Adrenal gland (tissue), 19 donors: ENCODE measurements at regions of chr9 and their contacts with region 1.

Region 1: DNA sequence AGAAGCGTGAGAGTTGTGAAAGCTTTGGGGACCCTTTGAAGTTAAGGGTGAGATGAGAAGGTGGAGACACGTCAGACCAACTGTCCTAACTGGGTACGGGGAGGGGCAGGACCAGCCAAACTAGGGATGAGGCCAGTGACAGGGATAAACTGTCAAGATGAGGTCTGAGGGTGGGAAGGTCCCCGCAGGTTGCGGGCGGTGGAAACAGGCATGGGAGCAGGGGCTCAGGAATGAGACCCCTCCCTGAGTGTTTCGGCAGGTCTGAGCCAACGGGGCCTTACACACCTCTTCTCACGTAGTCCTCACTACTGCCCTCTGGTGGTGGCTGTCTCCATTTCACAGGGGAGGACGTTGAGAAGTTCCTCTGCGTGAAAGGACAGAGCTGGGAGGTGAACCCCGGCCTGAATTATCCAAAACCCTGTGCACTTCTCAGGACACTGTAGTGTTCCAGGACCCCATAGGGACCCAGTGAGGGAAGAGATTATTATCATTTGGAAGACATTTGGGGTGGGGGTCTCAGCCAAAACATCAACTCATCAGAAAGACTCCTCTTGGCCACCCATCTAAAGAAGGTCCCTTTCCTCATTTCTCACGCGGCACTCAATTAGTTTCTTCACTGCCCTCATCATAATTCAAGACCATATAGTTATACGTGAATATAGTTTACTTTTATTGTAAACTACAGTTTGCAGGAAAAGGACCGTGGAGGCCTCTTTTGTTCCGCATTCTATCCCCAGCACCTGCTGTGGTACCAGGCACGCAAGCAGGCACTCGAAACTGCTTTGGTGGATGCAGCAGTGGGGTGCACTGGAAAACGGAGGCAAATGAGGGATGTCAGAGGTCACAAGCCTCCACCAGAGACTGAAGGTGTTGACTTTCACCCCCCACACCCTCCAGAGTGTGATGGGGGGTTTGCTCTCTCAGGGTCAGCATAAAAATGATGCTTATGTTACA is 21.7 kb upstream of the NANS start:
- DNase-seq: peak; percentile 80 to 94 (median 88)
- H3K4me3 ChIP-seq: no peak overlapping the region
- H3K27ac ChIP-seq: no peak overlapping the region
- H3K4me1 ChIP-seq: no peaks in the 10 kb centered on the region
- H3K27me3 ChIP-seq: no peaks in the 10 kb centered on the region
- CTCF ChIP-seq: peak; percentile 76 to 84 (median 79)
- POLR2A ChIP-seq: no peak

Region 2: DNA sequence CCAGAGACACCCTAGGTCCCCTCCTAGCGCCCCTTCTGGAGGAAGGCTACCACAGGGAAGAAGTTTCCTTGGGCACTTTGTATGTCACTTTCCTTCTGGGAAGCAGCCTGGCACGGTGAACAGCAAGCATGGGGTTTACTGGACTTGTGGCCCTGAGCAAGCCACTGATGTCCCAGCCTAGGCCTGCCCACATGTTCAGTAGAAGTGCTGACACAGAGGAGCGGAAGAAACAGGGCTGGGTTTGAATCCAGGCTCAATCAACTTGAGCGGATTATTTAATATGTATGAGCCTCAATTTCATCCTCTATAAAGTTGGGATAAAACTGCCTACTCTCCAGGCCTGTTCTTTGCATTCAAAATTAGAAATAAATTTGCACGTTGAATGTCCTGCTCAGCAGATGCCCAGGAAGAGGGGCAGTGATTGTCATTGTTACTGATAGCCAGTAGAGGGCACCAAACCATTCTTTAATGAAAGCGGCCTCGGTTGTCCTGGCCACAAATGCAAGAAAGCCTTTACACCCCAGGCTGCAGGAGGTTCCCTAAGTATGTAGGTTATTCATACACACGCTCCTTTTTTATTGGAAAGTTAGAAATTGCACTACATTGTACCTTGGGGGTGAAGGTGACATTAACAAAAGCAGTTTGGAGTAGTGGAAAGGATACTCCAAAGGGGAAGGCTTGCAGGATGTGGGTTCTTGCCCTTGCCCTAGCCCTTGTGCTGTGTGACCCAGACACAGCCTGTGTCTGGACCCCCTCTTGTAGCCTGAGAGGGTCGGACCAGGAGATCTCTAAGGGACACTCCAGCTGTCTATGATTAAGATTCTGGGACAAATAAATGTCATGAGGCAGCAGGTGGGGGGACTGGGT is 324.3 kb before region 1 on chr9:
- intact Hi-C with region 1: loop called in 1 of 2 experiments (anchors 10 kb)
- DNase-seq: peak; percentile 43 to 72 (median 60)
- H3K4me3 ChIP-seq: no peak overlapping the region
- H3K27ac ChIP-seq: no peak overlapping the region
- H3K4me1 ChIP-seq: no peaks in the 10 kb centered on the region
- H3K27me3 ChIP-seq: no peaks in the 10 kb centered on the region
- CTCF ChIP-seq: peak; percentile 69 to 86 (median 79)
- POLR2A ChIP-seq: no peak

Region 3: DNA sequence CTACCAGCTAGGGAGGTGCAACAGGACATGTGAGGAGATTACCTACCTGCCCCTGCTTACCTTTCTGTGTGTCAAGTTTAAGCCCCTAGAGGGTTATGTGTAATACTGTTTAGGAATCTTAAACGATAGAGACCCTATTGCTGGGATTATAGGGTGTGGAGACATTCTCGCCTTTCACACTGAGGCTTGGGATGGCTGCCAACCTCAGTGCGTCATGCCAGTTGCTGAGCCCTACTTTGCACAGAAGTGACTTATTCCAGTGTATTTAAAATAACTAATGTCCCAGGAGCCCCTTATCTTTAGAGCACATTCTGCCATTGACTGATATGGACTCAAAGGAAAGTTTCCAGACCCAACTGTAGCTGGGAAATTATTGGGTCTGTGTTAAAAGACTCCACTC is 261.1 kb before region 1 on chr9:
- intact Hi-C with region 1: no loop called
- DNase-seq: peak in 4 of 7 donors; percentile 17 to 35 (median 22)
- H3K4me3 ChIP-seq: no peak overlapping the region
- H3K27ac ChIP-seq: no peak overlapping the region
- H3K4me1 ChIP-seq: no peaks in the 10 kb centered on the region
- H3K27me3 ChIP-seq: peaks cover 15% of the 10 kb centered on the region
- CTCF ChIP-seq: no peak
- POLR2A ChIP-seq: no peak

Region 4: GRCh38 chr9:97907046-97907445 is 127.8 kb before region 1 on chr9:
- intact Hi-C with region 1: no loop called
- DNase-seq: no peak
- H3K4me3 ChIP-seq: no peak overlapping the region
- H3K27ac ChIP-seq: peak overlapping the region; percentile 66 to 85 (median 83)
- H3K4me1 ChIP-seq: peaks cover 23 to 29% of the 10 kb centered on the region in 2 donors
- H3K27me3 ChIP-seq: no peaks in the 10 kb centered on the region
- CTCF ChIP-seq: no peak
- POLR2A ChIP-seq: no peak

Region 5: GRCh38 chr9:97921959-97922724 is 112.7 kb before region 1 on chr9 and contains the start of gene TRMO:
- intact Hi-C with region 1: loop called (anchors 2 to 10 kb)
- DNase-seq: peak; percentile 97 to 100 (median 99)
- H3K4me3 ChIP-seq: peak within 1 kb of the TSS in 3 of 4 donors; percentile 34 to 68 (median 45)
- H3K27ac ChIP-seq: peak within 1 kb of the TSS; percentile 77 to 99 (median 98)
- H3K4me1 ChIP-seq: peaks cover 3 to 31% of the 10 kb centered on the region in 2 donors
- H3K27me3 ChIP-seq: no peaks in the 10 kb centered on the region
- CTCF ChIP-seq: peak in 5 of 6 experiments; percentile 22 to 71 (median 47)
- POLR2A ChIP-seq: peak; percentile 93 to 95
- total RNA-seq, gene TRMO: 11.4 to 30.3 (median 18.0) TPM

Region 6: DNA sequence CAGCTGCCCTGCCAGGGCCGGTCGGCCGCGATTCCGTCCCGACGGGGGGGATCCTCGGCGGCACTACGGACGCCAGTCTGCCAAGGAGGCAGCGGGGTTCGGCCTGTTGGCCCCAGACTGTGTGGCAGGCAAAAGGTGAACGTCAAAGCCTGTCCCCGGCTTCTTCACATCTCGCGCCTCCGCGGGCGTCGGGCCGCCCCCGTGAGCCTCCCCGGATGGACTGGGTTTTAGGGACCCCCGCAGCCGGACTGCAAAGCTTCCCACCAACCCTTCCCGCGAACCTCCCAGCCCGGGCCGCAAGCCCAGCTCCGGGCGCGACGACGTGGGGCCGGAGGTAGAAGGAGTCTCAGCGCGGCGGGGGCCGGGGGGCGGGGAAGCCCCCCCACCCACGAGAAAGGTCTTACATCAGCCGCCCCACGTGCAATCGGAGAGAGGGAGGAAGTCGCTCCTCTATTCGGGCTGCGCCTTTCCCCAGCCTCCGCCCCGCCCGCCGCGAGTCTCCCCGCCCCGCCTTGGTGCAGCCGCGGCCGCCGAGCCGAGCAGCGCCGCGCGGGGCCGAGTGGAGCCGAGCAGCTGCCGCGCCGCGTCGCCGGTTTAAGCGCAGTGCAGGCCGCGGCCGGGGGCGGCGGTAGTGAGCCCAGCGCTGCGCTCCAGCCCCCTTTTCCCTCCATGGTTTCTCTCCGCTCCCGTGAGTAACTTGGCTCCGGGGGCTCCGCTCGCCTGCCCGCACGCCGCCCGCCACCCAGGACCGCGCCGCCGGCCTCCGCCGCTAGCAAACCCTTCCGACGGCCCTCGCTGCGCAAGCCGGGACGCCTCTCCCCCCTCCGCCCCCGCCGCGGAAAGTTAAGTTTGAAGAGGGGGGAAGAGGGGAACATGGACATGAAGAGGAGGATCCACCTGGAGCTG is 51.9 kb before region 1 on chr9 and contains the start of gene ANP32B:
- intact Hi-C with region 1: loop called in 1 of 2 experiments (anchors 10 kb)
- DNase-seq: peak; percentile 86 to 91 (median 88)
- H3K4me3 ChIP-seq: peak within 1 kb of the TSS; percentile 90 to 99 (median 94)
- H3K27ac ChIP-seq: peak within 1 kb of the TSS; percentile 92 to 98 (median 96)
- H3K4me1 ChIP-seq: peaks cover 5 to 22% of the 10 kb centered on the region in 2 donors
- H3K27me3 ChIP-seq: no peaks in the 10 kb centered on the region
- CTCF ChIP-seq: peak; percentile 37 to 97 (median 74)
- POLR2A ChIP-seq: peak in 1 of 2 donors; percentile 43
- total RNA-seq, gene ANP32B: 13.4 to 100 (median 23.6) TPM